CD4-positive, alpha-beta memory T cell (primary cell): ENCODE measurements at regions of chr14 and their contacts with region 1.

Region 1: GRCh38 chr14:81453166-81453766 is 53.1 kb upstream of the STON2 start:
- DNase-seq: peak in 4 of 5 donors; percentile 39 to 46 (median 42)
- H3K4me3 ChIP-seq: no peak overlapping the region
- H3K4me3 Mint-ChIP-seq: no peak overlapping the region
- H3K27ac ChIP-seq: no peak overlapping the region
- H3K27ac Mint-ChIP-seq: no peak overlapping the region
- H3K4me1 ChIP-seq: no peaks in the 10 kb centered on the region
- H3K4me1 Mint-ChIP-seq: peaks cover 0 to 4% (median 3%) of the 10 kb centered on the region in 4 donors
- H3K27me3 ChIP-seq: no peaks in the 10 kb centered on the region
- H3K27me3 Mint-ChIP-seq: peaks cover 5 to 14% of the 10 kb centered on the region in 2 donors

Region 2: DNA sequence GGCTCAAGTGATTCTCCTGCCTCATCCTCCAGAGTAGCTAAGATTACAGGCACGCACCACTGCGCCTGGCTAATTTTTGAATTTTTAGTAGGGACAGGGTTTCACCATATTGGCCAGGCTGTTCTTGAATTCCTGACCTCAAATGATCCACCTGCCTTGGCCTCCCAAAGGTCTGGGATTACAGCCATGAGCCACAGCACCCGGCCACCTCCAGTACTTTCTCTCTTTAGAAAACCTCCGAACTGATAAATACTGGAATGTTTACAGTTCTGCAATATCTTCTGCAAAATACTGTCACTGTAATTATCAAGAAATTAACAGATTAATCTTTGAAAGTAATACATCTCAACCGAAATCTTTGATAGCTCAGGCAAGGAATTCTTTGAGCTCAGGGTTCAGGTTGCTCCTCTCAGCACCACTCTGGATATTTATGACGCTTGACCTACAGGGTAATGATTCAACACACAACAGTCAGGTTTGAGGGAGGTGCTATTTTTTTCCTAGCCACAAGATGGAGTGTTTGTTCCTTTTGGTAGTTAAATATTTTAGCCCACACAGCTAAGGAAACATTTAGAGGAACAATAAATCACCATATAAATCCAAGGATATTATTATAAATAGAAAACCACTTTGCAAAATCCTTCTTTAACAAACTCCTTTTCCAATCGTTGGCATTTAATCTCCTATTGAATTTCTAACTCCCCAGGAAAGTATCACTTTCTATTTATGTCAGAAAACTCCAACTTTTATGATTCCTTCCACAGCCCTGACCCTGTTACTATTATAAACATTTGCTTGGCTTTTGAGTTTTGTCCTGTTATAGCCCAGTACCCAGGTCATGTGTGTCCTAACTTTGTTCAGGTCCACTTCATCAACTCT is 183.9 kb before region 1 on chr14:
- CTCF ChIA-PET with region 1: interaction called, 63 read pairs
- POLR2A ChIA-PET with region 1: no interaction called
- intact Hi-C with region 1: loop called (anchors 1 kb)
- DNase-seq: peak in 4 of 5 donors; percentile 28 to 42 (median 32)
- H3K4me3 ChIP-seq: no peak overlapping the region
- H3K4me3 Mint-ChIP-seq: no peak overlapping the region
- H3K27ac ChIP-seq: no peak overlapping the region
- H3K27ac Mint-ChIP-seq: no peak overlapping the region
- H3K4me1 ChIP-seq: no peaks in the 10 kb centered on the region
- H3K4me1 Mint-ChIP-seq: peaks cover 0 to 8% (median 1%) of the 10 kb centered on the region in 4 donors
- H3K27me3 ChIP-seq: no peaks in the 10 kb centered on the region
- H3K27me3 Mint-ChIP-seq: peaks cover 7 to 11% of the 10 kb centered on the region in 2 donors